Stomach (tissue), 19 donors: ENCODE measurements at regions of chr4 and their contacts with region 1.

Region 1: GRCh38 chr4:146916479-146917076 is 29.1 kb downstream of the TTC29 start:
- DNase-seq: peak in 1 of 2 donors; percentile 66
- H3K4me3 ChIP-seq: no peak overlapping the region
- H3K27ac ChIP-seq: no peak overlapping the region
- H3K4me1 ChIP-seq: no peaks in the 10 kb centered on the region
- H3K27me3 ChIP-seq: no peaks in the 10 kb centered on the region
- CTCF ChIP-seq: peak in 5 of 7 experiments; percentile 40 to 63 (median 59)
- EP300 ChIP-seq: no peak
- POLR2A ChIP-seq: no peak

Region 2: DNA sequence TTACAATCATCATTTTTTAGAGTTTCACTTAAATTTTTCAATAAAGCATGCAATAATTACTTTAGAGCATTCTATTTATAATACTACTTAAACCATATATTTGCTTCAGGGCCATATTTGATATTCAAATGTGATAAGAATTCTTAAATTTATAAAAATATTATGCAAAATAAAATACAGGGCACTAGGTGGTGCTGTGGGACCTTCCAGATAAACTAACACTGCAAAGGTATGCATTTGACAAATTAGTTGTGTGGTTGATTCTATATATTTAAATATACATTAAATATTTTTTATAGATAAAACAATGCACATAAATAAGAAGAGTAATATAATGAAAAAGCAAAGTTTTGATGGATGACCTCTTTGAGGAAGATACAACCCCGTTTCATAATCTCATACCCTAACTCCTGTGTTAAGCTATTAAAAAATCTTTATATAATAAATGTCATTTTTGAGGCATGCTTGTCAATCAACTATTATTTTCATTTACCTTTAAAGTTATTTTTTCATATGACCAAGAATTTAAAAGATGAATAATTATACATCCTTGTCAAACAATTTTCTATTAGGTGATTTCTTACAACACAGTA is 573.9 kb before region 1 on chr4:
- intact Hi-C with region 1: loop called (anchors 10 kb)
- DNase-seq: peak in 1 of 2 donors; percentile 74
- H3K4me3 ChIP-seq: no peak overlapping the region
- H3K27ac ChIP-seq: no peak overlapping the region
- H3K4me1 ChIP-seq: no peaks in the 10 kb centered on the region
- H3K27me3 ChIP-seq: no peaks in the 10 kb centered on the region
- CTCF ChIP-seq: peak in 2 of 7 experiments; percentile 54 to 67
- EP300 ChIP-seq: no peak
- POLR2A ChIP-seq: no peak